ENCODE measurements at regions of chr6 and their contacts with region 1.

Region 1: DNA sequence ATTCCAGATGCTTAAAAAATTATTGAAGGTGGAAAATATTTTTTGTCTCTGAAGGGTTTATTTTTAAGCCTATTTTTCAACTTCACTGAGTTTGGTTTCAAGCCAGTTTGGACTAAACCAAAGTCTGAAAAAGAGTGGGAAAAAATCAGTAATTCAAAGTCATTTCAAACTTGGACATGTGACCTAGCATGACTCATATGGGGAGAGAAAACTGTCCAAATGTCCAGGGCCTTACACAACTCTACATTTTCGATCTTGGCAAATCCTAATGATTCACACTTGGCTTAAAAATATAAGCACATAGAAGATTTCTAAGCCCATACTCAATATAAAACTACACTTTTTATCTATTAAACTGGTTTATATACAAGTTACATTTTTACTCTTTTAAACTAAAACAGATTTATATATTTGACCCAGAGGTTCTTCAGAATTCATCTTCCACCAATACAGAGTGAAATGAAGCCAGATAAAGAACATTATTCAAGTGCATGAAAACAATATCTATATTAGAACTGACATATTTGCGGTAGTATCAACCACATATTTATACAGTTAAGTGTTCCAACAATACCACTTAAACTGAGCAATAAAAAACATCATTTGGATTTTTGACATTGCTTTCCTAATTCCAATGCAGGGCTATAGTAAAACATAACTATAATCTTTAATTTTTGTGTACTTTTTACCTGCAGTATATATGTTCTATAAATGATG is 110.3 kb upstream of the TCF21 start:
- DNase-seq: no peak
- H3K4me3 ChIP-seq: no peak overlapping the region
- H3K27ac ChIP-seq: peak overlapping the region; percentile 56 to 73
- H3K4me1 ChIP-seq: peaks cover 5 to 22% of the 10 kb centered on the region in 2 donors
- H3K27me3 ChIP-seq: no peaks in the 10 kb centered on the region
- CTCF ChIP-seq: no peak

Region 2: GRCh38 chr6:133396233-133396983 is 382.2 kb before region 1 on chr6:
- intact Hi-C with region 1: no loop called
- DNase-seq: no peak
- H3K4me3 ChIP-seq: no peak overlapping the region
- H3K27ac ChIP-seq: no peak overlapping the region
- H3K4me1 ChIP-seq: no peaks in the 10 kb centered on the region
- H3K27me3 ChIP-seq: no peaks in the 10 kb centered on the region
- CTCF ChIP-seq: no peak

Region 3: DNA sequence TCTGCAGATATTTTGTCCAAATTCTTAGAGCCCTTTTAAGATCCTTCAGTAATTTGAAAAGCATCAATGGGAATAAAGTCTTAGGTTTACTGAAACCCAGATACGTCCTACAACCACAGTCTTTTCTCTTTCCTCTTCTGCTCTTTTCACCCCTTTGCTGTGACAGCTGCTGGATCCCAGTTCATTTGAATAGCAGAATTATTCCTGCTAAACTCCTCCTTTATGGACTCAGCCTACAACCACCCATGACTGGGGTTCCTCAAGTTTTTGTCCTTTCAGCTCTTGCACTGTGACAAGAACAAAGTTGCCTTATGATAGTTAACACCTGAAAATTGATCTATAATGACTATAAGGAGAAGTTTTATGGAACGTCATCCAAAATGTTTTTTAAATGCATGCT is 299.9 kb before region 1 on chr6:
- intact Hi-C with region 1: no loop called
- DNase-seq: no peak
- H3K4me3 ChIP-seq: no peak overlapping the region
- H3K27ac ChIP-seq: no peak overlapping the region
- H3K4me1 ChIP-seq: no peaks in the 10 kb centered on the region
- H3K27me3 ChIP-seq: no peaks in the 10 kb centered on the region
- CTCF ChIP-seq: no peak

Region 4: DNA sequence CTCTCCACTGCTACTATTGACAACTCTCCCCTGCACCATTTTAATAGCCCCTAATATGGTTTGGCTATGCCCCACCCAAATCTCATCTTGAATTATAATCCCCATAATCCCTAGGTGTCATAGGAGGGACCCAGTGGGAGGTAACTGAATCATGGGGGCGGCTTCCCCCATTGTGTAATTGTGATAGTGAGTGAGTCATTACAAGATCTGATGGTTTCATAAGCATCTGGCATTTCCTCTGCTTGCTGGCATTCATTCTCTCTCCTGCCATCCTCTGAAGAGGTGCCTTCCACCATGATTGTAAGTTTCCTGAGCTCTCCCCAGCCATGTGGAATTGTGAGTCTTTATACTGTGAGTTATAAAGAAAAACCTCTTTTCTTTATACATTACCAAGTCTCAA is 36.2 kb after region 1 on chr6:
- intact Hi-C with region 1: loop called (anchors 5 kb)
- DNase-seq: no peak
- H3K4me3 ChIP-seq: no peak overlapping the region
- H3K27ac ChIP-seq: peak overlapping the region in 1 of 2 donors; percentile 57
- H3K4me1 ChIP-seq: peaks cover 0 to 5% of the 10 kb centered on the region in 2 donors
- H3K27me3 ChIP-seq: no peaks in the 10 kb centered on the region
- CTCF ChIP-seq: no peak

Region 5: DNA sequence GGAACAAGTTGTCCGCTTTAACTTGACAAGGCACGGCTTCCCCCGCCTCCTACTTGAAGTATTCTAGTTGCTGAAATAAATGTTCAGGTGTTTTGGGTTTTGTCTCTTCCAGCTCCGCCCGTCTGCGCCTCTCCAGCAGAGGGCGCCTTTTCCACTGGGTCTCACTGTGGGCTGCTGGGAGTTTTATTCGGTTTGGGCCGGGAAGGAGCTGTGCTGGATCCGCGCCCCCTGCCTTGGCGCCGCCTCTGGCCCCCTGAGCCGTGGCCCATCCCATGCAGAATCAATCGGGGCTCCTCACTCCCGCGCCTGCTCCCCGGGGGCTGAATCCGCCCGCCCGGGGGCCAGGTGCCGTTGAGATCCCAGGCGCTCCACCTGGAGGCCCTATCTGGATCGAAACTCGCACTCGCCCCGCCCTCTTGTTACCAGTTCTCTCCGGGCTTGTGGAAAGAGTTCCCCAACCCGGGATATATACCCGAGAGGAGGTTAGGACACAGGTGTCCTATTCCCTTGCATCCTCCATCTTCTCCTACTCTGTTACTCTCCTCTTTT is 59.3 kb after region 1 on chr6:
- intact Hi-C with region 1: no loop called
- DNase-seq: peak in 1 of 2 donors; percentile 68
- H3K4me3 ChIP-seq: peak overlapping the region; percentile 50 to 68
- H3K27ac ChIP-seq: no peak overlapping the region
- H3K4me1 ChIP-seq: no peaks in the 10 kb centered on the region
- H3K27me3 ChIP-seq: no peaks in the 10 kb centered on the region
- CTCF ChIP-seq: peak; percentile 19 to 70 (median 65)

Region 6: GRCh38 chr6:134058622-134059366 is 280.2 kb after region 1 on chr6:
- intact Hi-C with region 1: loop called (anchors 10 kb)
- DNase-seq: no peak
- H3K4me3 ChIP-seq: no peak overlapping the region
- H3K27ac ChIP-seq: peak overlapping the region; percentile 75 to 81
- H3K4me1 ChIP-seq: peaks cover 10 to 27% of the 10 kb centered on the region in 2 donors
- H3K27me3 ChIP-seq: no peaks in the 10 kb centered on the region
- CTCF ChIP-seq: no peak

Region 7: GRCh38 chr6:134105924-134106323 is 327.4 kb after region 1 on chr6:
- intact Hi-C with region 1: no loop called
- DNase-seq: no peak
- H3K4me3 ChIP-seq: no peak overlapping the region
- H3K27ac ChIP-seq: no peak overlapping the region
- H3K4me1 ChIP-seq: no peaks in the 10 kb centered on the region
- H3K27me3 ChIP-seq: no peaks in the 10 kb centered on the region
- CTCF ChIP-seq: no peak